ENCODE measurements at regions of chr12 and their contacts with region 1.

Region 1: GRCh38 chr12:34625116-34625515 is 602.8 kb downstream of the ALG10 start:
- DNase-seq: no peak
- ATAC-seq: no peak
- H3K4me3 Mint-ChIP-seq: no peak overlapping the region
- H3K27ac Mint-ChIP-seq: no peak overlapping the region
- H3K4me1 Mint-ChIP-seq: no peaks in the 10 kb centered on the region
- H3K27me3 Mint-ChIP-seq: no peaks in the 10 kb centered on the region

Region 2: DNA sequence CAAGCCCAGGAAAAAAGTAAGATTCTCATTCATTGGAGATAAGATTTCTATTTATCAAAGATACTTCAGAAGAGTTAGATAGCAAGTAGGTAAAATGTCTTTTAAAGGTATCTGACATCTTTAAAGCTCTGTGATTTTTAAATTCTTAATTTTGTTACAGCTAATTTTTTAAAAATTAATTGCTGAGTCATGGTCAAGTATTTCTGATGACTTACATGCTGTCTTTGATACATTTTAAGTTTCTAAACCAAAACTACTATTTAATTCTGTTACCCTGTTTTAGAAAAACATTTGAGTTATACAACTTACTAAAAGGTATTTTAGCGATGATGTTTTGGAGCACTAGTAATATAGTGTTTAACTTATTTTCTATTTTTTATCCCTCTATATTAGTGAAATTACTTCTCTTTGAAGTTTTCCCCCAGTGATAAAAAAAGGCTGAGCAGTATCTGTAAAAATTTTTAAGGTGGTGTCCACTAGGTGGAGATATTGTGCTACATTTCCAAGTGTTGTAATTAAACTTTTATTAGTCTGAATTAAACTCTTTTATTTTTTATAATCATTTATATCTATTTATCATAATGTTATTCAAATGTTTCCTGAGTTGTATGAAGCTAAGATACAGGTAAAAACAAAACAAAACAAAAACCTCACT is 591.4 kb before region 1 on chr12:
- CTCF ChIA-PET with region 1: no interaction called
- POLR2A ChIA-PET with region 1: no interaction called
- intact Hi-C with region 1: loop called in 1 of 2 experiments (anchors 5 kb)
- DNase-seq: no peak
- ATAC-seq: no peak
- H3K4me3 Mint-ChIP-seq: no peak overlapping the region
- H3K27ac Mint-ChIP-seq: no peak overlapping the region
- H3K4me1 Mint-ChIP-seq: no peaks in the 10 kb centered on the region
- H3K27me3 Mint-ChIP-seq: no peaks in the 10 kb centered on the region

Region 3: DNA sequence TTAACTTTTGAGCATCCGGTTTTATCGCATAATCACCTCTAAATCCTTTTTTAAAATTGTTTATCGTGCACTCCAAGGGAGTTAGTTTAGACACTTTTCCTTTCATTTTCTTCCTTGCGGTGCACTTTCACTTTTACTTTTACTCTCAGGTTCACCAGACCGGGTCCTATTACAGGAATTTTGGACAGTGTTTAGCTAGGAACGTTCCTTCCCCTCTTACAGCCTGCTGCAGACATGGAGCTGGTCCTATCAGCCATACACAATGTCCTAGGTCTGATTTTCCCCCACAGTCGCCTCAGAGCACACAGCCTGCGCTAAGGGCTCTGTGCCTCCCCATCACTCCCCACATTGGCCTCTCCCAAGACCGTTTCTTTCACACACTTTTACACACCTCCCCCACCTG is 498.9 kb before region 1 on chr12:
- CTCF ChIA-PET with region 1: no interaction called
- POLR2A ChIA-PET with region 1: no interaction called
- intact Hi-C with region 1: loop called in 1 of 2 experiments (anchors 1 kb)
- DNase-seq: no peak
- ATAC-seq: peak; percentile 47
- H3K4me3 Mint-ChIP-seq: peak overlapping the region; percentile 26
- H3K27ac Mint-ChIP-seq: peak overlapping the region; percentile 59
- H3K4me1 Mint-ChIP-seq: peaks cover 11% of the 10 kb centered on the region
- H3K27me3 Mint-ChIP-seq: peaks cover 16% of the 10 kb centered on the region

Region 4: GRCh38 chr12:34606749-34607519 is 18.2 kb before region 1 on chr12:
- CTCF ChIA-PET with region 1: no interaction called
- POLR2A ChIA-PET with region 1: no interaction called
- intact Hi-C with region 1: no loop called
- DNase-seq: no peak
- ATAC-seq: no peak
- H3K4me3 Mint-ChIP-seq: no peak overlapping the region
- H3K27ac Mint-ChIP-seq: no peak overlapping the region
- H3K4me1 Mint-ChIP-seq: no peaks in the 10 kb centered on the region
- H3K27me3 Mint-ChIP-seq: no peaks in the 10 kb centered on the region